Natural killer cell (primary cell): ENCODE measurements at regions of chr1 and their contacts with region 1.

Region 1: GRCh38 chr1:155017041-155017945 is 14.7 kb downstream of the ZBTB7B start:
- DNase-seq: peak; percentile 88 to 94
- ATAC-seq: peak; percentile 99
- H3K4me3 ChIP-seq: peak overlapping the region; percentile 13
- H3K4me3 Mint-ChIP-seq: peak overlapping the region; percentile 52
- H3K27ac ChIP-seq: peak overlapping the region; percentile 68
- H3K27ac Mint-ChIP-seq: peak overlapping the region; percentile 27 to 50
- H3K4me1 ChIP-seq: peaks cover 58% of the 10 kb centered on the region
- H3K4me1 Mint-ChIP-seq: peaks cover 17 to 46% of the 10 kb centered on the region in 2 donors
- H3K27me3 ChIP-seq: no peaks in the 10 kb centered on the region
- H3K27me3 Mint-ChIP-seq: no peaks in the 10 kb centered on the region
- CTCF ChIP-seq: peak; percentile 100

Region 2: DNA sequence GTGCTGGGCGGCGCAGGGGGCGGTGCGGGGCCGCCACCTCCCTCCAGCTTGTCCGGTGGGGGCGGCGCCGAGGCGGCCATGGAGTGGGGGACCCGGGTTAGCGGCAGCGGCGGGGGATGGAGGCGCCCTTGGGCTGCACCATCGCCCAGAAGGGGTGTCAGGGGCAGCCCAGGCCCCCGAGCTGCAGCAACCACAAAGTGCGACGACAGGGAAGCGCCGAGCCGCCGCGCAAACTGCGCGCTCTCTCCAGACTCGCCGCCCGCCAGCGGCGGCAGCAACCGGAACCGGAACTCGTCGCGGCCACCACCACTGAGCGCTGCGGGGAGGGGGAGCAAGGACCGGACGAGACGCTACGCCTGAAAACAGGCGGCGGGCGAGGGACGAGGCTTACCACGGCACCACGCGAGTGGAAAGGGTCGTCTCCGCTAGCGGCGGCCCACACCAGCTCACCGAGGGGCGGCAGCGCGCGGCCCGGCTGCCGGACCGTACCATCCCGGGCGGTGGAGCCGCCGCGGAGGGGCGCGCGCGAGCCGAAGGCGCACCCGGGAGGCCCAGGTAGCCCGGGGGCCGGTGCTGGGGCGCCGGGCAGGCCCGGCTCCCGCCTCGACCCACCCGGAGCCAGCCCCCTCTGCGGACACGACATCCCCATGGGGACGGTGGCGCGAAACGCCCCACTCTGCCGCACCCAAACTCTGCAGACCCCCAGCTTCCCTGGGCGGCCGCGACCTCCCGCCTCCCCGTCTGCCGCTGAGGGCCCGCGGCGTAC is 55.6 kb before region 1 on chr1 and contains the start of gene PYGO2:
- intact Hi-C with region 1: loop called (anchors 1 kb)
- DNase-seq: peak; percentile 79 to 89
- ATAC-seq: peak; percentile 82 to 90 (median 84)
- H3K4me3 ChIP-seq: peak within 1 kb of the TSS; percentile 65
- H3K4me3 Mint-ChIP-seq: peak within 1 kb of the TSS; percentile 91
- H3K27ac ChIP-seq: peak within 1 kb of the TSS; percentile 93
- H3K27ac Mint-ChIP-seq: peak within 1 kb of the TSS; percentile 88
- H3K4me1 ChIP-seq: peaks cover 22% of the 10 kb centered on the region
- H3K4me1 Mint-ChIP-seq: peaks cover 18 to 29% of the 10 kb centered on the region in 2 donors
- H3K27me3 ChIP-seq: no peaks in the 10 kb centered on the region
- H3K27me3 Mint-ChIP-seq: no peaks in the 10 kb centered on the region
- CTCF ChIP-seq: peak; percentile 76
- total RNA-seq, gene PYGO2: 21.6 to 32.1 (median 27.5) TPM

Region 3: DNA sequence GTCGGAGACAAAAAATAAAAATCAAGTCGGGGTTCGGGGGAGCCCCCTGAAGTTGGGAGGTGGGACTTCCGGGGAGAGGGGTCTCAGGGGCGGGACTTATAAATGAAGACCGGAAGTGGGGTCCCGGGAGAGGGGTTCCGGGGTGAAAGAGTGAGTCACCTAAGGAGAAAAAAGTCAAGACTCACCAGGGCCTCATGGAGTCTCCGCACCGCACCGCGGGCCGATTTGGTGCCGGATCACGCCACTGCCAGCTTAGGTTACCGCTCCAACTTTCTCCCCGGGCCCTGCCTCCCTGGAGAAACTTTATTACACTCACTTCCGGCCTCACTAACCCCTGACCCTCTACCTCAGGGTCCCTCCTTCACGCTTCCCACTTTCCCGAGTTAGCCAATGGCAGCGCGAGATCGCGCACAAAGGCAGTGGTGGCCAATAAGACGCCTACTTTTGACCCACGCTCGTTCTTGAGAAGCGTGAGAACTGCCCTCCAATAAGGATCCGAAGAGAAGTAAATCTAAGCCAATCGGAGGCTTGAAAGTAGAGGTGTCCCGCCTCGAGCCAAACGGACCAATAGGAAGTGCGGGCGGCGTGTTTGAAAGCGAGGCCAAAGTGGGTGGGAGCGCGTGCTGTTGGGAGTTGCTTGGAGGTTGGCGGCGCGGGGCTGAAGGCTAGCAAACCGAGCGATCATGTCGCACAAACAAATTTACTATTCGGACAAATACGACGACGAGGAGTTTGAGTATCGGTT is 43.1 kb before region 1 on chr1 and contains the start of gene CKS1B:
- intact Hi-C with region 1: loop called (anchors 2 kb)
- DNase-seq: peak; percentile 96 to 99
- ATAC-seq: peak; percentile 78 to 94 (median 85)
- H3K4me3 ChIP-seq: peak within 1 kb of the TSS; percentile 91
- H3K4me3 Mint-ChIP-seq: no peak within 1 kb of the TSS
- H3K27ac ChIP-seq: peak within 1 kb of the TSS; percentile 99
- H3K27ac Mint-ChIP-seq: no peak within 1 kb of the TSS
- H3K4me1 ChIP-seq: peaks cover 43% of the 10 kb centered on the region
- H3K4me1 Mint-ChIP-seq: peaks cover 15 to 26% of the 10 kb centered on the region in 2 donors
- H3K27me3 ChIP-seq: no peaks in the 10 kb centered on the region
- H3K27me3 Mint-ChIP-seq: no peaks in the 10 kb centered on the region
- CTCF ChIP-seq: no peak
- total RNA-seq, gene CKS1B: 8.5 to 13.0 (median 12.9) TPM